CD4-positive, alpha-beta T cell (primary cell): ENCODE measurements at regions of chr3 and their contacts with region 1.

Region 1: DNA sequence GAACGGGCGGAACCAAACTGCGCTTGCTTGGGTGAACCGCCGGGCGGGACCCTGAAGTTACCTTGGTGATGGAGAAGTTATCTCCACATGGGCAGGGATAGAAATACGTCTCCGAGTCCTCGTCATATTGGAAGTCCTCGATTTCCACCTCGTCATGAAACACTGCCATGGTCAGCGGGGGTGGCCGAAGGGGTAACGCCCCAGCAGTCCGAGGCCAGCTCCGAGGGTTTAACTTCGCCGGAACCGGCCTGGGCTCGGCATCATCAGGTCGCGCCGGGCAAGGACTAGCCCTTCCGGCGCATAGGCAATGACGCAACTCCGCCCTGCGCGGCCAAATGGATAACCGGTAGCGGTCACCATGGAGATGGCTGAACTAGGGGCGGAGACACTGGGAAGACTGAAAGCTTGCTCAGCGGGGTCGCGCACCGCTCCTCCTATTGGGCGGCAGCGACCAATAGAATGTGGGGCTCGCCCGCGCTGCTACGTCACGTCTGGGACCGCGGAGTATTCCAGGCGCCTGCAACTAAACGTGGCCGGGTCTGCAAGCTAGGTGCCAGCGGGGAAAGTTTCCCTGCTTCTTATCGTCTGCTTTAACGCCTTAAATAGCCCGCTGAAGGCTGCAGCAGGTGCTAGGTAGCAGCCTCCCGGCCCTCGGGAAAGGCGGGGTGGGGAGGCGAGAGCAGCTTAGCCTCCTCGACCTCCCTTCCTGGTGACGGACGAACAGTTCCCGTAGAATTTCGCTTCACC is at the starts of genes DPH3 and OXNAD1:
- DNase-seq: peak; percentile 95 to 100 (median 98)
- ATAC-seq: peak; percentile 89
- H3K4me3 ChIP-seq: peak within 1 kb of the TSS; percentile 78
- H3K4me3 Mint-ChIP-seq: peak within 1 kb of the TSS; percentile 100
- H3K27ac ChIP-seq: peak within 1 kb of the TSS; percentile 91 to 94
- H3K27ac Mint-ChIP-seq: peak within 1 kb of the TSS; percentile 97
- H3K4me1 ChIP-seq: peaks cover 20% of the 10 kb centered on the region
- H3K4me1 Mint-ChIP-seq: peaks cover 48% of the 10 kb centered on the region
- H3K27me3 ChIP-seq: no peaks in the 10 kb centered on the region
- H3K27me3 Mint-ChIP-seq: no peaks in the 10 kb centered on the region
- CTCF ChIP-seq: no peak
- total RNA-seq, gene DPH3: 10.5 to 12.8 TPM
- total RNA-seq, gene OXNAD1: 135 TPM

Region 2: DNA sequence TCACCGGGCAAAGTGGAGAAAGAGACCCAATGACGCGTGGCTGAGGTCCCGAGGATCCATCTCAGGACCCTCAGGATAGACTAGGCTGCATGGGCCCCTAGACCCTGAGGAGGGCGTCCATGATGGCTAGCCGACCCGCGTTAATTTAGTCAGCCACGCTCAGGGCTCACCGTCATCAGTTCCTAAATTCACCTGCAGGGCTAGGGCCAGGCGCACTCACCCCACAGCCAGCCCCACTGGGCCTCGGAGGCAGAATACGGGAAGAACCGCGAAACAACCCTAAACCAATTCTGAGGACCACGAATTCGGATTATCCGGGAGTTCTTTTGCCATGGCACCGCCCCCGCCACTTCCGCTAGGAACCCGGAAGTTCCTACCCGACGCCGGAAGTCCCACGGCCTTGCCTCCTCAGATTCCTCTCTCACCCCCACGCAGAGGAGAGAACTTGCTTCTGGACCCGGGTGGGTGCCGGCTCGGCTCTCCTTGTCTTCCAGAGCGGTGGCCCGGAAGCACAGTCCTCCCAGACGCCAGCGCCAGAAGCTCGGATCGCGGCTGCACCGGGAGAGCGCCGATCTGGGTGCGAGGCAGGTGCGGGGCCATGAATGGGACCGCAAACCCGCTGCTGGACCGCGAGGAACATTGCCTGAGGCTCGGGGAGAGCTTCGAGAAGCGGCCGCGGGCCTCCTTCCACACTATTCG is 837.5 kb before region 1 on chr3 and contains the starts of genes EAF1 and METTL6:
- CTCF ChIA-PET with region 1: no interaction called
- POLR2A ChIA-PET with region 1: no interaction called
- intact Hi-C with region 1: loop called in 1 of 2 experiments (anchors 10 kb)
- DNase-seq: peak; percentile 71 to 91 (median 80)
- ATAC-seq: peak; percentile 84
- H3K4me3 ChIP-seq: peak within 1 kb of the TSS; percentile 72
- H3K4me3 Mint-ChIP-seq: peak within 1 kb of the TSS; percentile 93
- H3K27ac ChIP-seq: peak within 1 kb of the TSS; percentile 58 to 80
- H3K27ac Mint-ChIP-seq: peak within 1 kb of the TSS; percentile 81
- H3K4me1 ChIP-seq: peaks cover 33% of the 10 kb centered on the region
- H3K4me1 Mint-ChIP-seq: peaks cover 74% of the 10 kb centered on the region
- H3K27me3 ChIP-seq: no peaks in the 10 kb centered on the region
- H3K27me3 Mint-ChIP-seq: no peaks in the 10 kb centered on the region
- CTCF ChIP-seq: peak; percentile 19
- total RNA-seq, gene EAF1: 31.7 to 34.9 TPM
- total RNA-seq, gene METTL6: 4.7 to 5.7 TPM

Region 3: DNA sequence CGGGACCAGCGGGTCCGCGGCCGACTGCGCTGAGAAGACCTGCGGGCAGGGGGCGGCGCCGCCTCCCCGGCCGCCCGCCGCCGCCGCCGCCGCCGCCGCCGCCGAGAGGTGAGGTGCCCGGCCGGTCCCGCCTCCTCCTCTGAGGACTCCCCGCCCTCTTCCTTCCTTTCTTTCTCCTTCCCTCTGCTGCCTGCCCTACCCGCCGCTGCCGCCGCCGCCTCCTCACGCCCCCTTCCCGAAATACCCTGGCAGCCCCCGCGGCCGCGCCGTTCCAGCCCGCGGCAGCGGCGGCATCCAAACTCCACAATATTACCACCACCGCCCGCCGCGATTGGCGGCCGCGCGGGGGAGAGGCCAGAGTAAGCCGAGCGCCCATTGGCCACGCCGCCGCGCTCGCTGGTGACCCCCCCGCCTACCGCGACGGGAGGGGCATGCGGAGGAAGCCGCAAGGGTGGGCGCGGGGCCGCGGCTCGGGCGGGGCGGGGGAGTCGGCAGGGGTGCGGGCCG is 405.3 kb before region 1 on chr3:
- CTCF ChIA-PET with region 1: no interaction called
- POLR2A ChIA-PET with region 1: no interaction called
- intact Hi-C with region 1: loop called in 1 of 2 experiments (anchors 5 kb)
- DNase-seq: peak; percentile 45 to 89 (median 63)
- ATAC-seq: peak; percentile 77
- H3K4me3 ChIP-seq: peak overlapping the region; percentile 74
- H3K4me3 Mint-ChIP-seq: peak overlapping the region; percentile 100
- H3K27ac ChIP-seq: no peak overlapping the region
- H3K27ac Mint-ChIP-seq: peak overlapping the region; percentile 93
- H3K4me1 ChIP-seq: peaks cover 15% of the 10 kb centered on the region
- H3K4me1 Mint-ChIP-seq: peaks cover 41% of the 10 kb centered on the region
- H3K27me3 ChIP-seq: no peaks in the 10 kb centered on the region
- H3K27me3 Mint-ChIP-seq: no peaks in the 10 kb centered on the region
- CTCF ChIP-seq: no peak

Region 4: GRCh38 chr3:16290007-16290826 is 25.3 kb after region 1 on chr3:
- CTCF ChIA-PET with region 1: interaction called, 78 read pairs
- POLR2A ChIA-PET with region 1: interaction called, 49 read pairs
- intact Hi-C with region 1: loop called (anchors 1 kb)
- DNase-seq: peak in 11 of 14 experiments; percentile 35 to 80 (median 58)
- ATAC-seq: peak; percentile 12
- H3K4me3 ChIP-seq: peak overlapping the region; percentile 91
- H3K4me3 Mint-ChIP-seq: peak overlapping the region; percentile 95
- H3K27ac ChIP-seq: peak overlapping the region; percentile 65 to 88
- H3K27ac Mint-ChIP-seq: peak overlapping the region; percentile 92
- H3K4me1 ChIP-seq: peaks cover 46% of the 10 kb centered on the region
- H3K4me1 Mint-ChIP-seq: peaks cover 73% of the 10 kb centered on the region
- H3K27me3 ChIP-seq: no peaks in the 10 kb centered on the region
- H3K27me3 Mint-ChIP-seq: no peaks in the 10 kb centered on the region
- CTCF ChIP-seq: peak; percentile 97

Region 5: DNA sequence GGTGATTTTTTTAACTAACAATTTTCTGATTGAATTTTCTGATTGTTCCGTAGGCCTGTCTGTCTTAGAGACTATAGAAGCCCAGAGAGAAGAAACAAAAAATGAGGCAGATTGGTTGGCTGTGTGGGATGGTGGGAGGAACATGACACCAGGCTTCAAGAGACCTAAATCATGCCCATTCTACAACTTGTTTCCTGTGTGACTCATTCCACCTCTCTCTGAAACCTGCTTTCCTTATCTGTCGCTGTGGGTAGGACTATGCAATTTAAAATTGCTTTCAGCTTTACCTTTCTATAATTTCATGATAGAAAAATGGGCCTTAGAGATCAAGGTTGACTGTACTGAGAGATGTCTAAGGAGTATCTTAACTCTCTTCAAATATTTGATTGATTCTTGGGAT is 44.7 kb after region 1 on chr3:
- CTCF ChIA-PET with region 1: interaction called, 14 read pairs
- POLR2A ChIA-PET with region 1: interaction called, 7 read pairs
- intact Hi-C with region 1: no loop called
- DNase-seq: peak in 9 of 14 experiments; percentile 32 to 88 (median 52)
- ATAC-seq: peak; percentile 69
- H3K4me3 ChIP-seq: no peak overlapping the region
- H3K4me3 Mint-ChIP-seq: peak overlapping the region; percentile 83
- H3K27ac ChIP-seq: peak overlapping the region; percentile 63 to 67
- H3K27ac Mint-ChIP-seq: peak overlapping the region; percentile 94
- H3K4me1 ChIP-seq: peaks cover 78% of the 10 kb centered on the region
- H3K4me1 Mint-ChIP-seq: peaks cover 94% of the 10 kb centered on the region
- H3K27me3 ChIP-seq: no peaks in the 10 kb centered on the region
- H3K27me3 Mint-ChIP-seq: no peaks in the 10 kb centered on the region
- CTCF ChIP-seq: no peak

Region 6: DNA sequence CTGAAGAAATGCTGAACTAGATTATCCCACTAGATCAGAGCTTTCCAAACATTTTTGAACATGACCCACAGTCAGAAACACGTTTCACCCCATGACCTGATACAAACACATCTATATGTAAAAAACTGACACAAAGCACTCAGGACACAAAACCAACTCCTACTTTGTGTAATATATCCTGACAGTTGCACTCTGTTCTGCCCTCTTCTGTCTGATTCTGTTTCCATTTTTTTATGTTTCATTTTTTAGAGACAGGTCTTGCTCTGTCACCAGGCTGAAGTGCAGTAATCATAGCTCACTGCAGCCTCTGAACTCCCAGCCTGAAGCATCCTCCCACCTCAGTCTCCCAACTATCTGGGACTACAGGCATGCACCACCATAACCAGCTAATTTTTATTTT is 264.4 kb after region 1 on chr3:
- CTCF ChIA-PET with region 1: interaction called, 4 read pairs
- POLR2A ChIA-PET with region 1: interaction called, 6 read pairs
- intact Hi-C with region 1: loop called (anchors 5 kb)
- DNase-seq: peak in 3 of 14 experiments; percentile 47 to 53 (median 50)
- ATAC-seq: peak; percentile 89
- H3K4me3 ChIP-seq: no peak overlapping the region
- H3K4me3 Mint-ChIP-seq: no peak overlapping the region
- H3K27ac ChIP-seq: no peak overlapping the region
- H3K27ac Mint-ChIP-seq: no peak overlapping the region
- H3K4me1 ChIP-seq: no peaks in the 10 kb centered on the region
- H3K4me1 Mint-ChIP-seq: peaks cover 12% of the 10 kb centered on the region
- H3K27me3 ChIP-seq: no peaks in the 10 kb centered on the region
- H3K27me3 Mint-ChIP-seq: no peaks in the 10 kb centered on the region
- CTCF ChIP-seq: peak; percentile 51

Region 7: GRCh38 chr3:16849229-16849628 is 584.3 kb after region 1 on chr3:
- CTCF ChIA-PET with region 1: no interaction called
- POLR2A ChIA-PET with region 1: no interaction called
- intact Hi-C with region 1: loop called in 1 of 2 experiments (anchors 10 kb)
- DNase-seq: peak; percentile 44 to 89 (median 62)
- ATAC-seq: peak; percentile 96
- H3K4me3 ChIP-seq: peak overlapping the region; percentile 36
- H3K4me3 Mint-ChIP-seq: peak overlapping the region; percentile 78
- H3K27ac ChIP-seq: peak overlapping the region in 1 of 2 donors; percentile 35
- H3K27ac Mint-ChIP-seq: peak overlapping the region; percentile 67
- H3K4me1 ChIP-seq: peaks cover 53% of the 10 kb centered on the region
- H3K4me1 Mint-ChIP-seq: peaks cover 51% of the 10 kb centered on the region
- H3K27me3 ChIP-seq: no peaks in the 10 kb centered on the region
- H3K27me3 Mint-ChIP-seq: no peaks in the 10 kb centered on the region
- CTCF ChIP-seq: no peak

Region 8: DNA sequence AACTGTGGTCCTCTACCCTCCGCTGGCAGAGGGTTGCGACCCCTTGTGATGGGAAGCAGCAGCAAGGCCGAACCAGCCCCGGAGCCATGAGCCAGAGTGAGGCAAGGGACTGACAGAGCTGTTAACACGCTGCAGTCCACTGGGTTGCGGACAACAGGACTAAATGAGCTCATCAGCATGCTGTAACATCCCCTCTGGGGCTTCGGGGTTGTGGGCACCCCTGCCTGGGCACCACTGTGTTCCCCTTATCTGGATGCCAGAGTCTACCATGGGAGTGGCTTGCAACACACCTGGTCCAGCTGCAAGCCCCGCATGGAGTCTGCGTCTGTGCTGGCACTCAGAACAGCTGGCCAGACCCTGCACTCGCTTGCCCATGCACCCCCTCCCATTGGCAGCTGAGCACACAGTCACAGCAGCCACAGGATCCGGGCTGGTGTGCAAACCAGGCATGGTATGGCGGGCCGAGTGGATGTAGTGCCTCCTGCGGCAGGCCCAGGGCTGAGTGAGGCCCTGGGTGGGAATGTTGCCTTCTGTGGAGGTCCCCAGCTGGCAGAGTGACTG is 1024.0 kb after region 1 on chr3:
- CTCF ChIA-PET with region 1: no interaction called
- POLR2A ChIA-PET with region 1: no interaction called
- intact Hi-C with region 1: no loop called
- DNase-seq: no peak
- ATAC-seq: no peak
- H3K4me3 ChIP-seq: no peak overlapping the region
- H3K4me3 Mint-ChIP-seq: no peak overlapping the region
- H3K27ac ChIP-seq: no peak overlapping the region
- H3K27ac Mint-ChIP-seq: no peak overlapping the region
- H3K4me1 ChIP-seq: no peaks in the 10 kb centered on the region
- H3K4me1 Mint-ChIP-seq: no peaks in the 10 kb centered on the region
- H3K27me3 ChIP-seq: no peaks in the 10 kb centered on the region
- H3K27me3 Mint-ChIP-seq: no peaks in the 10 kb centered on the region
- CTCF ChIP-seq: no peak